H1 (cell line): ENCODE measurements at regions of chr7 and their contacts with region 1.

Region 1: GRCh38 chr7:41940760-41941343 is 238.0 kb upstream of the INHBA start:
- DNase-seq: peak in 1 of 2 experiments; percentile 78
- H3K4me3 ChIP-seq: no peak overlapping the region
- H3K27ac ChIP-seq: no peak overlapping the region
- H3K4me1 ChIP-seq: peaks cover 0 to 7% (median 5%) of the 10 kb centered on the region in 4 experiments; a peak in 3 of 7 replicates
- H3K27me3 ChIP-seq: peaks cover 0 to 4% (median 3%) of the 10 kb centered on the region in 4 experiments; a peak in 3 of 7 replicates
- CTCF ChIP-seq: peak; percentile 70 to 95 (median 84)
- EP300 ChIP-seq: no peak
- POLR2A ChIP-seq: no peak
- RAD21 ChIP-seq: peak; percentile 93 to 94

Region 2: GRCh38 chr7:41955893-41956675 is 15.2 kb after region 1 on chr7:
- CTCF ChIA-PET with region 1: interaction called, 27 read pairs
- POLR2A ChIA-PET with region 1: interaction called, 3 read pairs
- DNase-seq: peak; percentile 57 to 66
- H3K4me3 ChIP-seq: no peak overlapping the region
- H3K27ac ChIP-seq: no peak overlapping the region
- H3K4me1 ChIP-seq: peaks cover 0 to 9% (median 7%) of the 10 kb centered on the region in 4 experiments; a peak in 6 of 7 replicates
- H3K27me3 ChIP-seq: peaks cover 0 to 2% (median 0%) of the 10 kb centered on the region in 4 experiments; a peak in 2 of 7 replicates
- CTCF ChIP-seq: no peak
- EP300 ChIP-seq: no peak
- POLR2A ChIP-seq: no peak
- RAD21 ChIP-seq: peak; percentile 15 to 16; a peak in 2 of 4 replicates

Region 3: GRCh38 chr7:42617806-42618457 is 677.1 kb after region 1 on chr7:
- CTCF ChIA-PET with region 1: interaction called, 11 read pairs
- POLR2A ChIA-PET with region 1: no interaction called
- DNase-seq: peak in 1 of 2 experiments; percentile 57
- H3K4me3 ChIP-seq: no peak overlapping the region
- H3K27ac ChIP-seq: no peak overlapping the region
- H3K4me1 ChIP-seq: peaks cover 0 to 4% (median 2%) of the 10 kb centered on the region in 4 experiments; a peak in 2 of 7 replicates
- H3K27me3 ChIP-seq: no peaks in the 10 kb centered on the region
- CTCF ChIP-seq: peak; percentile 47 to 56 (median 56)
- EP300 ChIP-seq: no peak
- POLR2A ChIP-seq: no peak
- RAD21 ChIP-seq: peak; percentile 63 to 74

Region 4: DNA sequence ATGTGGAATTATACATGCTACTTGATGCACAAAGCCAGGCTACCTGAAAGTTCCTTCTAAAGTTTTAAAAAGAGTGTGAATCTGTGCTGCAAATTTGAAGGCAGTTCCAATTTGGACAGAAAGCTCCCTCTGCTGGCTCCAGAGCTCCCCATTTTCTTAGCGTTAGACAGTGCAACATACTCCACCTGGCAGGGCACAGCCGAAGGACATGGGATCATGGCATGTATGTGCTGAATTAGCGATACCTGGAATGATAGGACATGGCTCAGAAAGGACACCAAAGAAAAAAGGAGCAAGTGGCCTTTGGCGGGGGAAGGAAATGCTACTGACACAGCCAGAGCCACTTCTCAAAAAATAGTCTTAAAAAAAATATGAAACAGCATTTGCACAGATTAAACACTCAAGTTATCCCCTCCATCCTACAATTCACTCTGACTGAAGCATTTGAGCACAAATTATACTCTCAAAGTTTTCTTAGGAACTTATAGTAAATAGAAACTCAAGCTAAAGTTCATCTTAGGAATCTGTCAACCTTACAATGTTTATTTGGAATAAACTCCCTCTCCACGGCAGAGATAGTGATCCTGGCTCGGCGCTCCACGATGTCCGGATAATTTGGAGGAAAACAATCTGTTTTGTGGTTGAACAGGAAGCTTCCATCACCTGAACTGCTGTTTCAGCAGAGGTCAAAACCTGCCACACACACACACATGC is 891.0 kb after region 1 on chr7:
- CTCF ChIA-PET with region 1: interaction called, 17 read pairs
- POLR2A ChIA-PET with region 1: no interaction called
- DNase-seq: no peak
- H3K4me3 ChIP-seq: no peak overlapping the region
- H3K27ac ChIP-seq: no peak overlapping the region
- H3K4me1 ChIP-seq: no peaks in the 10 kb centered on the region
- H3K27me3 ChIP-seq: no peaks in the 10 kb centered on the region
- CTCF ChIP-seq: peak; percentile 41 to 71 (median 69)
- EP300 ChIP-seq: no peak
- POLR2A ChIP-seq: no peak
- RAD21 ChIP-seq: peak; percentile 74 to 82